ENCODE measurements at regions of chr18 and their contacts with region 1.

Region 1: GRCh38 chr18:10131460-10132395 is 217.9 kb downstream of the VAPA start:
- DNase-seq: peak; percentile 54 to 69
- H3K4me3 ChIP-seq: peak overlapping the region; percentile 46
- H3K4me3 Mint-ChIP-seq: peak overlapping the region; percentile 79
- H3K27ac Mint-ChIP-seq: peak overlapping the region; percentile 61
- H3K4me1 ChIP-seq: peaks cover 5% of the 10 kb centered on the region; the same call in 1 of the 2 replicates
- H3K4me1 Mint-ChIP-seq: no peaks in the 10 kb centered on the region
- H3K27me3 ChIP-seq: no peaks in the 10 kb centered on the region
- H3K27me3 Mint-ChIP-seq: no peaks in the 10 kb centered on the region
- CTCF ChIP-seq: no peak

Region 2: DNA sequence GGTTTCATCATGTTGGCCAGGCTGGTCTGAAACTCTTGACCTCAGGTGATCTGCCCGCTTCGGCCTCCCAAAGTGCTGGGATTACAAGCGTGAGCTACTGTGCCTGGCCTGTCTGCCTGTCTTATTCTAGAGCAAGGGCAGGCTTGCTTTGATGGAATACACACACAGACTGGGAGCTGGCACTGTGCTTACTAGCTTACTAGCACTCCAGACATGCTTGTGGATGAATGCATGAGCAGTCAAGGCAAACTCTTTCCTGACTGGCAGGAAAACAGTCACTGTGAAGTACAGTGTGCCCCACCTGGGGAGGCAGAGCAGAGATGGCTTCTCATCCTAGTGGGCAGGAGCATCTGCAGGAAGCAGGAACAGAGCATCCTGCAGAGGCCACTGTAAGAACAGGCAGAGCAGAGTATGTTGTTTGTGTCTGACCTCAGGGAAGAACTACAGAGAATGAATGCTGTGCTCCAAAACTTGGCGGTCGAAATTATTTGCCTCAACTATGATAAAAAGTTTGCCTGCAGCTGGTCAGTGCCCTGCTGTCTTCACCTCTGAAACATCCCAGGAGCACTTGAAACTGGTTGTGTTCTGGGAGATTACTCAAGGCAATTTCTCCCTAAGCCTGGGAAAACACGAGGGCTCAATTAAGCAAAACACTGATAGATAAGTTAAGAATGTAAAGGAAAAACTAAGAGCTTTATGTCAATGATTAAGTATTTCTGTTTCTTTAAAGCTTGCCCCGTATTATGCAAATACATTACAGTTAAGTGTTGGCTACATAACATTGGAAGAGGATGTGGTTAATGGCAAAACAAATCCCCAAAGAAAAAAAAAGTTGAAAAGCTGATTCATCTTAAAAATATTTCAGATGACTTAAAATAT is 115.5 kb before region 1 on chr18:
- CTCF ChIA-PET with region 1: interaction called, 3 read pairs
- POLR2A ChIA-PET with region 1: no interaction called
- intact Hi-C with region 1: loop called (anchors 10 kb)
- DNase-seq: peak; percentile 13 to 29
- H3K4me3 ChIP-seq: no peak overlapping the region
- H3K4me3 Mint-ChIP-seq: no peak overlapping the region
- H3K27ac Mint-ChIP-seq: no peak overlapping the region
- H3K4me1 ChIP-seq: peaks cover 26% of the 10 kb centered on the region
- H3K4me1 Mint-ChIP-seq: peaks cover 43% of the 10 kb centered on the region
- H3K27me3 ChIP-seq: no peaks in the 10 kb centered on the region
- H3K27me3 Mint-ChIP-seq: no peaks in the 10 kb centered on the region
- CTCF ChIP-seq: peak in 1 of 2 experiments; percentile 24

Region 3: DNA sequence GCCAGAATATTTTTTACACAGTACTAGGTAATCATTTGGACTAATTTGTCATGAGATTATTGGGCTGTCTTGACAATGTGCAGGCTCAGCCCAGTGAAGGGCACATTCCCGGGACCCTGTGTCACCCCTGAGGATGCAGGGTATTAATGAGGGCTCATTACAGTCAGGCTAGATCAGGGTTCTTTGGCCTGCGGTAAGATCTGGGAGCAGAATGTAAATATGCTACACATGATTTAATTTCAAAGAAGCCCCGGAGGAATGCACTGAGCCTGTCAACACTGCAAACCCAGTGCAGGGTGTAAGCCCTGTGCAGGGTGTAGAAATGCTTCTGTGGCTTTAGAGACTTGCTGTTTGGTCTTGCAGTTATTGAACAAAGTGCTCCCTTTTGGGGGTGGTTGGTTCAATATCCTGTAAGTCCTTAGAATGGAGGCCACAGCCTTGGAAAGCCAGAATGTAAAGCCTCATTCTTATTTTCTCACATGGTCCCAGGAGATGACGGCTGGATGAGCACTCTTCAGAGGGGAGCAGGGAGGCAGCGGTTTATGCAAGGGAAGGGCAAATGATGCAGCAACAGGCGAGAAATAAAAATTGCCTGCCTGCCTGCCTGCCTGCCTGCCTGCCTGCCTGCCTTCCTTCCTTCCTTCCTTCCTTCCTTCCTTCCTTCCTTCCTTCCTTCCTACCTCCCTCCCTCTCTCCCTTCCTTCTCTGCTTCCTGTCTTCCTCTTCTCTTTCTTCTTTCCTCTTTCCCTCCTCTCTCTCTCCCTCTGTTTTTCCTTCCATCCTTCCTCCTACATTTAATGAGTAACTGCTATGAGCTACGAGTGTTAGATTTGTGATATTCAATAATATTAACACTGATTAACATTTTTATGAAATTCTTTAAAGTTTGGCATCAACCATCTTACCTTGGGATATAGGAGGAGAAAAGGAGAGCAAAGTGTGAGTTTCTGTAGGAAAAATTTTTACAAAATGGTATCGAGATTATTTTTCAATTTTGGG is 69.1 kb before region 1 on chr18:
- CTCF ChIA-PET with region 1: no interaction called
- POLR2A ChIA-PET with region 1: no interaction called
- intact Hi-C with region 1: no loop called
- DNase-seq: no peak
- H3K4me3 ChIP-seq: no peak overlapping the region
- H3K4me3 Mint-ChIP-seq: no peak overlapping the region
- H3K27ac Mint-ChIP-seq: no peak overlapping the region
- H3K4me1 ChIP-seq: no peaks in the 10 kb centered on the region
- H3K4me1 Mint-ChIP-seq: peaks cover 13% of the 10 kb centered on the region
- H3K27me3 ChIP-seq: no peaks in the 10 kb centered on the region
- H3K27me3 Mint-ChIP-seq: peaks cover 5% of the 10 kb centered on the region
- CTCF ChIP-seq: no peak

Region 4: DNA sequence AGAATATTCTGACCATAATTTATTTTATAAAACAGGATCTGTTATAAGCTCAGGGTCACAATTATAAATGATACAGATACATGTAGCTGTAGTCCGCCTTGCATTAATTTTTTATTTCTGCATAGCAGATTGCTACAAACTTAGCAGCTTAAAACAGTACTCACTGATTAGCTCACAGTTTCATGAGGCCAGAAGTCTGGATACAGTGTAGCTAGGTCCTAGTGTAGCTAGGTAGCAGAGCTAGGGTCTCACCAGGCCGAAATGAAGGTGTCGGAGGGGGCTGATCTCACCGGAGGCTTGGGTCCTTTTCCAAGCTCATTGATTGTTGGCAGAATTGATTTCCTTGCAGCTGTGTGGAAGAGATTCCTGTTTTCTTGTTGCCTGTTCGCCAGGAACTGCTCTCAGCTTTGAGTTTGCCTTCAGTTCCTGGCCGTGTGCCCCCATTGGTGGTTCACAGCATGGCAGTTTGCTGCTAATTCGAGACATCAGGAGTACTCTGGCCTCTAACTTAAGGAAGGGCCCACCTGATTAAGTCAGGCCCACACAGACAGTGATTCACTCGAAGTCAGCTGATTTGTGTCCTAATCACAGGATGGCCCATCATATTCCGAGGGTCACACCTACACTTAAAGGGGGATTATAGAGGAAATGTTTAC is 412.5 kb after region 1 on chr18:
- CTCF ChIA-PET with region 1: no interaction called
- POLR2A ChIA-PET with region 1: no interaction called
- intact Hi-C with region 1: no loop called
- DNase-seq: no peak
- H3K4me3 ChIP-seq: no peak overlapping the region
- H3K4me3 Mint-ChIP-seq: no peak overlapping the region
- H3K27ac Mint-ChIP-seq: no peak overlapping the region
- H3K4me1 ChIP-seq: no peaks in the 10 kb centered on the region
- H3K4me1 Mint-ChIP-seq: peaks cover 7% of the 10 kb centered on the region
- H3K27me3 ChIP-seq: no peaks in the 10 kb centered on the region
- H3K27me3 Mint-ChIP-seq: no peaks in the 10 kb centered on the region
- CTCF ChIP-seq: no peak